Mammary epithelial cell (primary cell): ENCODE measurements at regions of chr17 and their contacts with region 1.

Region 1: GRCh38 chr17:39485555-39485954 is 24.3 kb downstream of the CDK12 start:
- DNase-seq: peak; percentile 94
- H3K4me3 ChIP-seq: no peak overlapping the region
- H3K27ac ChIP-seq: peak overlapping the region; percentile 60
- H3K4me1 ChIP-seq: peaks cover 17% of the 10 kb centered on the region
- H3K27me3 ChIP-seq: no peaks in the 10 kb centered on the region
- CTCF ChIP-seq: no peak

Region 2: DNA sequence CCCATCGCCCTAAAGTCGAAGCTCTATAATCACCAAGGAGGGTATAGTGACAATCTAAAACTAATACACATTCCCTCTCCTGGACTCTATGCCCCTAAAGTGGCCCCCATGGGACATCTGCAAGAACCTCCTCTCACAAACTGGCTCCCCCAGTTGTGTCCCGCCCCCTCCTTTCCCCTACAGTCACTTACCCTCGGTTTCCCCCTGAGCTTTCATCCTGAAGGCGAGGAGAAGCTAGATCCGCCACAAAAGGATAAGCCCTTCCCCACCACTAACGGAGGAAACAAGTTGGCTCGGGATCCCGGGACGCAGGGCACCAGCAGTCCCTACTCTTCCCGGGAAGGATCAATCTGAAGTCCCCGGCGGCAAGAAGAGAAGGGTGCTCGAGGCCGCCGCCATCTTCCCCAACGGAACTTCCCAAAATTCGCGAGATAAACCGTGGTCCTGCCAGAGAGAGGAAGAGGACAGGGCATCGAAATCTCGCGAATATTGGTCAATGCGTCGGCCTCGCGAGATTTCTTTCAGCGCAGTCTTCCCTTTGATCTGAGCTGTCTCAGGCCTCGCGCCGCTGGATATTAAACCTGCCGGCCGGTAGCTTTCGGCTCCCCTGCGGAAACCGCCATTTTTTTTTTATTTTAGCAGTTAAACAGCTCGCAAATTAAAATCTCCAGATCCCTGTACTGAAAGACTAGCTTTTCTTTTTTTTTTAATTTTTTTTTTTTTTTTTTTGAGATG is 34.5 kb before region 1 on chr17 and contains the start of gene MED1:
- CTCF ChIA-PET with region 1: no interaction called
- dilution Hi-C with region 1: no loop called
- in situ Hi-C with region 1: no loop called
- intact Hi-C with region 1: loop called (anchors 5 kb)
- DNase-seq: peak; percentile 97
- H3K4me3 ChIP-seq: peak within 1 kb of the TSS; percentile 77 to 82 (median 79)
- H3K27ac ChIP-seq: peak within 1 kb of the TSS; percentile 91
- H3K4me1 ChIP-seq: peaks cover 9% of the 10 kb centered on the region
- H3K27me3 ChIP-seq: no peaks in the 10 kb centered on the region
- CTCF ChIP-seq: no peak
- total RNA-seq, gene MED1: 26.7 to 41.7 TPM